ENCODE measurements at regions of chr2 and their contacts with region 1.

Region 1: DNA sequence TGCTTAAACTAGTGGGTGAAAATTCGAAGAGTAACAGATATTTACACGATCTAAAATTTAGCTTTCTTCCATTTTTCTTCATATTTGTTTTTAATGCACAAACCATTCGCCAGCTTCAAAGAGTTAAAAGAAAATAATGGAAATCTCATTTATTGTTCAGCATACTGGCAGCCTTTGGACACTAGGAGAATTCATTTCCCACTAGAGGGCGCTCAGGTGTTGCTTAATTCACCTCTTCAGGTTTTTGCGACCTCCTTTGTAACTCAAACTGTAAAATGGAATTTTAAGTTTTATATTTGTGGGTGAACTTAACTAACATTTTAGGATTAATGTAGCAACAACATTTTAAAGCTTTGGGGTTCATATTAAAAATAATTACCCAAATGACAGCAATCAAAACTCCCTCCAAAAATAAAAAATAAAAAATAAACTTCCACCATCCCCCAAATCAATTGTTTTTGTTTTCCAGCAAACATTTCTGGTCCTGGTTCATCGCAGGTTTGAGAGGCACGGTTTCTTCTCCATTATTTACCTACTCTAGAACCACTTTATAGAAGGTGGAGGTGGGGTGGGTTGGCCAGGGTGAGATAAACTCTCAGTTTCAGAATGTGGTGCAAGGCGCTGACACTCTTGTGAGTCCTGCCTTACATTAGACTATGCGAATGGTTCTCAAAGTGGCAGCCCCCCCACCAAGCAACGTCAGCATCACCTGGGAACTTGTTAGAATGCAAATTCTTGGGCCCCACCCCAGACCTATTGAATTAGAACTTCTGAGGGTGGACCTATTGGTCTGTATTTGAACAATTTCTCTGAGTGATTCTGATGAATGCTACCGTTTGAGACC is 24.7 kb upstream of the PNPT1 start:
- DNase-seq: peak; percentile 61
- H3K4me3 Mint-ChIP-seq: no peak overlapping the region
- H3K27ac Mint-ChIP-seq: no peak overlapping the region
- H3K4me1 Mint-ChIP-seq: no peaks in the 10 kb centered on the region
- H3K27me3 Mint-ChIP-seq: peaks cover under 1% of the 10 kb centered on the region

Region 2: DNA sequence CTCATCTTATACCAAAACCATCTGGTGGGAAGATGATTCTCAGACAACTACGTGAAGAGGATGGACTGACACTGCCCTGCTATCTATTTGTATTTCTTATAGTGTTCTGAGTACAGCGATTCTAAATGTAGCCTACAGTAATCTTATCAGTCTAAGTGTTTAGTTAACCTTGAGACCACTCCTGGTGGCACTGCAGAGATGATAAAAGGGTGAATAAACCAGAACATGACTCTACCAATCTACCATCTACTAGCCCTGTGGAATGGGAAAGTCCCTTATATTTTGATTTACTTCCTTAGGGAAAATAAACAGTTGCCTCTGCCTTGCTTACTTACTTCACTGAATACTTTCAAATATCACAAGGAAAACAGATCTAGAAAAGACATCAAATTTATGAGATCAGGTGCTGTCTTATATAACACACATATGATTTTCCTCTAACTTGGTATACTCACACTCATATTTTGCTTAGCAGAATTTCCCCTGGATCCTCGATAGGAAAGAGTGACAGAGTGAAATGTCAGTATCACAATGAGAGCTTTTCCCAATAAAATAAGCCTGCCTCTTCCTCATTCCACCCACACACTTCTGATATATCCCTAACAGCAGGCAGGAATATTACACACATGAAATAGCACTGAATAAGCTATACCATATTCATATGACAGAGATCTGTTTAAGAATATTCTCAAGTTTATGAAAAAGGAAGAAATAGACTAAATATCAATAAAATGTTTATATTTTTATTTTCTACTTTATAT is 390.7 kb before region 1 on chr2:
- CTCF ChIA-PET with region 1: no interaction called
- DNase-seq: no peak
- H3K4me3 Mint-ChIP-seq: no peak overlapping the region
- H3K27ac Mint-ChIP-seq: no peak overlapping the region
- H3K4me1 Mint-ChIP-seq: no peaks in the 10 kb centered on the region
- H3K27me3 Mint-ChIP-seq: no peaks in the 10 kb centered on the region

Region 3: GRCh38 chr2:55490554-55490953 is 227.8 kb before region 1 on chr2:
- CTCF ChIA-PET with region 1: no interaction called
- DNase-seq: no peak
- H3K4me3 Mint-ChIP-seq: no peak overlapping the region
- H3K27ac Mint-ChIP-seq: no peak overlapping the region
- H3K4me1 Mint-ChIP-seq: no peaks in the 10 kb centered on the region
- H3K27me3 Mint-ChIP-seq: peaks cover 10% of the 10 kb centered on the region

Region 4: GRCh38 chr2:55751966-55752365 is 33.6 kb after region 1 on chr2:
- CTCF ChIA-PET with region 1: no interaction called
- DNase-seq: no peak
- H3K4me3 Mint-ChIP-seq: no peak overlapping the region
- H3K27ac Mint-ChIP-seq: no peak overlapping the region
- H3K4me1 Mint-ChIP-seq: no peaks in the 10 kb centered on the region
- H3K27me3 Mint-ChIP-seq: no peaks in the 10 kb centered on the region

Region 5: DNA sequence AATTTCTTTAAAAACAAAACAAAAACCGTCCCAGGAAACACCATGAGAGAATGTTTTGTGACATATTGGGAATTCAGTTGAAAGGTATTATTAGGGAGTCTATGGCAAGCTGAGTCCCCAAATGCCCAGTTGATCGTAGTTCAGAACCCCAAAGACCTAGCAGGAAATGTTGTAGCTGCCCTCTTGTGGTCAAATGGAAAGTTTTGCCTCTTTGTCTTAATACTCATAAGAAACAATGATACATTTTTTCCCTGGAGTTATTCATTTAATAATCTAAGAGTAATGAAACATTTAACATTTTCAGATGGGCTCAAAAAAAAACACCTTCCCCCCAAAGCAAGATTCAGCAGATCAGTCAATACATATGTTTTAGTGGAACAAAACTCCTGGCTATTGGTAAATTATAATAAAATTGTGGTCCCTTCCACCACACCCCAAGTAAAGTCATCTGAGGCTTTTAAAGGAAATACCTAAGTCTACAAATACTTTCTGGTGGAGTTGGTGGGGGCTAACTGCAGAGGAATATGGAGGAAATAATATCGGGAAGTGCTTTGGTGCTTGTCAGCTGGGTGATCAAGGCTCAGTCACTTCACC is 243.0 kb after region 1 on chr2:
- CTCF ChIA-PET with region 1: interaction called, 11 read pairs
- DNase-seq: no peak
- H3K4me3 Mint-ChIP-seq: no peak overlapping the region
- H3K27ac Mint-ChIP-seq: no peak overlapping the region
- H3K4me1 Mint-ChIP-seq: no peaks in the 10 kb centered on the region
- H3K27me3 Mint-ChIP-seq: no peaks in the 10 kb centered on the region